ENCODE measurements at regions of chr9 and their contacts with region 1.

Region 1: DNA sequence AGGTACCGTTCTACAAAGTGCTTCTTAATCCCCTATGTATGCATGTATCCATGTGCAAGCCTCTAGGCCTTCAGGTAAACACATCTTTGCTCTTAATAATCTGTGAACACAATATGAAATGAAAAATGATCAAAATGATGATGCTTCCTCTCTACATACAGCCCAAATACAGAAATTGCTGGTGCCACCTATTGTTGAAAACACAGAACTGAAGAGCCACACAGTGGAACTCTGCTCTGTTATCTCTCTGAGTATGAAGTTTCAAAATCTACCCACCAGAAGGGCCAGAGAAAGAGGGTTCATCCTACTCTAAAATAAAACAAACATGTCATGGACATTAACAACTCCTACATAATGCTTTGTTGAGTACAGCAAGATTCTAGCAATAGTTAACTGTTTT is 71.3 kb downstream of the GLIS3 start:
- DNase-seq: no peak
- ATAC-seq: peak; percentile 76

Region 2: DNA sequence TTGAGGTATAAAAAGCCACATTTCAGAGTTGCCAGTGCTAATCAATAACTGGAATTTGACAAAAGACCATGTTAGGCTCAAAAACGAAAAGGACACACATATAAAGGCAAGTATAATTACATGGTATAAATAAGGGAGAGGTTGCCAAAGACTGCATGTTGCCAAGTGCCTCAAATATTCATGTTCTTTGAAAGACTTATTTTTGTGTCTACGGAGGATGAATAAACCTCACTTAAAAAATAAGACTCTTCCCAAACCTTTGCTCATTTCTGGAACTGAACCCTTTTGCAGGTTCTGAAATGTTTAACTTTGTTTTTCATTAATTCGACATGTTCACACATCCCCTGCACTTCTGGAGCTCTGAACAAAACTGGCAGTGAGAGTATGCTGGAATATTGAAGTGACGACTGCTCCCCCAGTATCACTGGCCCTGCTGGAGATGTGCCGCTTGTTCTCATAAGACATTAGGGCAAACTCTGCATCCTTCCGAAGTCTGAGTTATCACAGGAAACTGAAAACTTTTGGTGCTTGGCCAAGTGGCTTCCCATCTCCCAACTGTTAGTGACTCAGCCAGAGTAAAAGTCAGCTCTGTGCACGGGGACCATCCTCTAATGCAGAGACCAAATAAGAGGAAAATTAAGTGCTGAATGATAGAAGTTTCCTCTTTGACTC is 265.5 kb before region 1 on chr9:
- intact Hi-C with region 1: no loop called
- DNase-seq: no peak
- ATAC-seq: peak; percentile 80

Region 3: GRCh38 chr9:4080921-4081895 is 147.4 kb before region 1 on chr9:
- intact Hi-C with region 1: loop called (anchors 5 kb)
- DNase-seq: no peak
- ATAC-seq: no peak

Measured in Right ventricle myocardium inferior (tissue), 1 donor.